Right lobe of liver (tissue), 6 donors: ENCODE measurements at regions of chr10 and their contacts with region 1.

Region 1: GRCh38 chr10:4849555-4850242 is 23.7 kb downstream of the AKR1E2 start:
- DNase-seq: peak; percentile 90 to 94 (median 91)
- ATAC-seq: peak; percentile 83 to 90 (median 86)
- H3K4me3 ChIP-seq: no peak overlapping the region
- H3K27ac ChIP-seq: peak overlapping the region; percentile 52 to 92 (median 88)
- H3K4me1 ChIP-seq: peaks cover 0 to 33% (median 13%) of the 10 kb centered on the region in 4 donors
- H3K27me3 ChIP-seq: no peaks in the 10 kb centered on the region
- CTCF ChIP-seq: peak; percentile 99 to 100 (median 100)
- POLR2A ChIP-seq: peak; percentile 48

Region 2: GRCh38 chr10:4260483-4261124 is 589.1 kb before region 1 on chr10:
- intact Hi-C with region 1: no loop called
- DNase-seq: no peak
- ATAC-seq: no peak
- H3K4me3 ChIP-seq: no peak overlapping the region
- H3K27ac ChIP-seq: no peak overlapping the region
- H3K4me1 ChIP-seq: peaks cover 0 to 10% (median 0%) of the 10 kb centered on the region in 4 donors
- H3K27me3 ChIP-seq: no peaks in the 10 kb centered on the region
- CTCF ChIP-seq: no peak
- POLR2A ChIP-seq: no peak

Region 3: DNA sequence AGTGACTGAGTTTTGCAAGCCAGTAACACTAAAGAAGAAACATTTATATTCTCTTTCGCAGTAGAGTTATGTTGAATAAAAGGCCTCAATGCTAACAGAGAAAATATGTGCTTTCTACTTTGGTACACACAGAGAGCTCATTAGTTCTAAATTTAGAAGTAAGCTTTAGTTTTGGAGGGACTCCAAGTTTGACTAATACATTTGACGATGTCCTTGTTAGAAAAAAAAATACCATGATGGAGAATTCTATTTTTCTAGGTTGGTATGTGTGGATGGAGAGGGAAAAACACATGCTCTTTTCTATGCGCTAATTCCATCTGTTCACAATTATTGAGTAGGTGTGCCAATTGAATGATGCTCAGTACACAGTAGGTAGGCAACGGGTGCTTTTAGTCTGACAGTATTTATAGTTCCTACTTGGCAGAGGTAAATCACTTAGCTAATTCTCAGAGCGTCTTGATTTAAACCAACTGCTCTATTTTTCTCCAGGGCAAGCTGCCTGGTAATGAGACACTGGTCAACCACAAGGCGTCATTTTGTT is 350.9 kb before region 1 on chr10:
- intact Hi-C with region 1: no loop called
- DNase-seq: no peak
- ATAC-seq: no peak
- H3K4me3 ChIP-seq: no peak overlapping the region
- H3K27ac ChIP-seq: peak overlapping the region in 2 of 3 donors; percentile 5 to 33
- H3K4me1 ChIP-seq: no peaks in the 10 kb centered on the region
- H3K27me3 ChIP-seq: no peaks in the 10 kb centered on the region
- CTCF ChIP-seq: no peak
- POLR2A ChIP-seq: no peak

Region 4: DNA sequence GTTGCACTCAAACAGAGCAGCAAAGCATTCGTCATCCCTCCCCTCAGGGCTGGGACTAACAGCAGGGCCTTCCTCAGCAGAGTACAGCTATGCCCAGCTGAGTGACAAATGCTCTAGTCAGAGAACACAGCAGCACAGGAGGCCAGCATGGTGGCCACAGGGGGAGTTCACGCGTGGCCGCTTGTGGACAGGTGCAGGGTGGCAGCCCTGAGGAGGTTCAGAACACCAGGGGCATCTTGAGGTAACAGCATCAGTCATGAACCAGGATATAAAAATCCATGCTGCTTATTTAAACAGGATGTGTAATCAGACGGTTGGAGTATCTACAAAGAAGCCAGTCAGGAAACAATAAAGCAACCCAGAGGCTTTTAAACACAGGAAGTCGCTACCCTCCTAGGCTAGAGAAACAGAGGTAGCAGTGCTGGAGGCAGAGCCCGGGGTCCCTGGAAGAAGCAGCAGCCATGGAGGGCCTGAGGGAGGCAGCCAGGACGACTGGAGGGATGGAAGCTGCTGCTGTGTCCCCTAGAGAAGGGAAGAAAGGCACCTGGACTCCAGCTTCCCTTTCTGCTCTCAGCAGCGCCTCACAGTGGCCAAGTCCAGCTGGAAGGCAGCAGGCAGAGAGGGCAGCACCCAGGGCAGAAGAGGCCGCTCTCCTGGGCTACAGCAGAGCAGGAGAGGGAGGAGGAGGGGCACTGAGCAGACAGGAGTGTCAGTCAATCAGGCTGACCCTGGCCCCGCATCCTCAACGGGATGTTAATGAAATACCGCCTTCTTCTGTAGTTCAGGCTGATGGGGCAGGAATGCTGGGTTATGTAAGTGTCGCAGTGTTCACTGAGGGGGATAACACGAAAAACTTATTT is 444.2 kb after region 1 on chr10:
- intact Hi-C with region 1: loop called in 1 of 2 experiments (anchors 10 kb)
- DNase-seq: peak; percentile 65 to 77 (median 71)
- ATAC-seq: peak; percentile 62 to 79 (median 72)
- H3K4me3 ChIP-seq: no peak overlapping the region
- H3K27ac ChIP-seq: no peak overlapping the region
- H3K4me1 ChIP-seq: no peaks in the 10 kb centered on the region
- H3K27me3 ChIP-seq: no peaks in the 10 kb centered on the region
- CTCF ChIP-seq: peak; percentile 32 to 56 (median 41)
- POLR2A ChIP-seq: no peak

Region 5: GRCh38 chr10:5948999-5949759 is 1099.5 kb after region 1 on chr10:
- intact Hi-C with region 1: no loop called
- DNase-seq: peak; percentile 74 to 79 (median 74)
- ATAC-seq: peak; percentile 47 to 73 (median 59)
- H3K4me3 ChIP-seq: no peak overlapping the region
- H3K27ac ChIP-seq: peak overlapping the region; percentile 39 to 83 (median 62)
- H3K4me1 ChIP-seq: peaks cover 0 to 17% (median 6%) of the 10 kb centered on the region in 4 donors
- H3K27me3 ChIP-seq: no peaks in the 10 kb centered on the region
- CTCF ChIP-seq: peak; percentile 43 to 67 (median 54)
- POLR2A ChIP-seq: no peak